ENCODE measurements at regions of chr16 and their contacts with region 1.

Region 1: GRCh38 chr16:1054660-1055556 is 17.6 kb upstream of the SSTR5 start:
- DNase-seq: peak in 1 of 2 experiments; percentile 92
- H3K4me3 ChIP-seq: no peak overlapping the region
- H3K27ac ChIP-seq: no peak overlapping the region
- H3K4me1 ChIP-seq: no peaks in the 10 kb centered on the region
- H3K27me3 ChIP-seq: no peaks in the 10 kb centered on the region
- CTCF ChIP-seq: peak; percentile 82 to 91 (median 84)
- EP300 ChIP-seq: no peak
- POLR2A ChIP-seq: no peak
- RAD21 ChIP-seq: peak; percentile 95 to 96

Region 2: GRCh38 chr16:768428-768827 is 286.5 kb before region 1 on chr16:
- CTCF ChIA-PET with region 1: no interaction called
- POLR2A ChIA-PET with region 1: no interaction called
- DNase-seq: no peak
- H3K4me3 ChIP-seq: no peak overlapping the region
- H3K27ac ChIP-seq: no peak overlapping the region; the same call in 1 of the 2 replicates
- H3K4me1 ChIP-seq: peaks cover 0 to 8% (median 6%) of the 10 kb centered on the region in 4 experiments; a peak in 5 of 7 replicates
- H3K27me3 ChIP-seq: no peaks in the 10 kb centered on the region
- CTCF ChIP-seq: no peak
- EP300 ChIP-seq: no peak
- POLR2A ChIP-seq: no peak
- RAD21 ChIP-seq: no peak

Region 3: DNA sequence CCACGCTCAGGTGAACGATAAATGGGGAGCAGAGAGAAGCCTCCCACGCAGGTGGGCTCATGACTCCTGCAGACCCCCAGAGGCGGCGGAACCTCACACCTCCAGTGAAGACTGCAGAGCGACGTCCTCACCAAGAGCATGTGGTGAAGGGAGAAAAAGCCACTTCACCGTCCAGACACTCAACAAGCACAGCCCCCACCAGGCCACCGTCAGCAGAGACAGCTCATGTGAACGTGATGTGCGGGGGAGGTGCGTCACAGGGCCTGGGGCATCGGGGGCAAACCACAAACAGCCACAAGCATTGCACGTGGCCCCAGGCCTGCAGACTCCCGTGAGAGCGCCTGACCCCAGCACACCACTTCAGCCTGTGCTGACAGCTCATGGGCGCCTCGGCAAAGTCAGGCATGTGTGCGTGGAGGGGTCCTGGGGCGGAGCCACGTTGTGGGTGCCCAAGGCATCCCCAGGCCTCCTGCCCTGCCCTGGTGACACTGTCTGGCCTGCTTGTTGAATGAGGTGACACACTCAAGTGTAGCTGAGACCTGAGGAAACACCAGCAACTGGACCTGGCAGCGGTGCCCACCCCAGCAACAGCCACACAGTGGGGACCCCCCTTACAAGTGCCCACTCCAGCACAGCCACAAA is 103.1 kb before region 1 on chr16:
- CTCF ChIA-PET with region 1: no interaction called
- POLR2A ChIA-PET with region 1: no interaction called
- DNase-seq: no peak
- H3K4me3 ChIP-seq: no peak overlapping the region
- H3K27ac ChIP-seq: no peak overlapping the region
- H3K4me1 ChIP-seq: no peaks in the 10 kb centered on the region
- H3K27me3 ChIP-seq: no peaks in the 10 kb centered on the region; a peak in 1 of 7 replicates
- CTCF ChIP-seq: no peak
- EP300 ChIP-seq: no peak
- POLR2A ChIP-seq: no peak
- RAD21 ChIP-seq: no peak

Region 4: DNA sequence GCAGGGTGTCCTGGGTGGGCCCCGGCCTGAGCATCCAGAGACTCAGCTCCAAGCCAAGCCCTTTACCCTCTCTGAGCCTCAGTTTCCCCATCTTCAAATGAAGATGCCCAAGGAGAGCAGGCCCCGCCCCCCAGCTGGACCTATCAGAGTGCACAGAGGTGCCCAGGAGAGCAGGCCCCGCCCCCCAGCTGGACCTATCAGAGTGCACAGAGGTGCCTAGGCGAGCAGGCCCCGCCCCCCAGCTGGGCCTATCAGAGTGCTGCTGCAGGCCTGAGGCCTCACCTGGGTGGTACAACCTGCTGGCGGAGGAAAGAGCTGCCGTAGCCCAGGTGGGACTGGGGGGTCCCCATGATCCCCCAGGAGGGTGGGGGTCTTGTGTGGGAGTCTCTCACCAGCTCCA is 14.2 kb after region 1 on chr16:
- CTCF ChIA-PET with region 1: interaction called, 29 read pairs
- POLR2A ChIA-PET with region 1: no interaction called
- DNase-seq: no peak
- H3K4me3 ChIP-seq: no peak overlapping the region
- H3K27ac ChIP-seq: no peak overlapping the region
- H3K4me1 ChIP-seq: peaks cover 0 to 22% (median 16%) of the 10 kb centered on the region in 4 experiments; a peak in 6 of 7 replicates
- H3K27me3 ChIP-seq: peaks cover 2 to 16% (median 12%) of the 10 kb centered on the region in 4 experiments; a peak in 6 of 7 replicates
- CTCF ChIP-seq: no peak
- EP300 ChIP-seq: no peak
- POLR2A ChIP-seq: no peak
- RAD21 ChIP-seq: no peak

Measured in H1 (cell line).